Aorta (tissue), 5 donors: ENCODE measurements at regions of chr20 and their contacts with region 1.

Region 1: GRCh38 chr20:3465301-3465700 is 5.5 kb upstream of the ATRN start:
- DNase-seq: no peak
- ATAC-seq: no peak
- H3K4me3 ChIP-seq: no peak overlapping the region
- H3K27ac ChIP-seq: no peak overlapping the region
- H3K4me1 ChIP-seq: no peaks in the 10 kb centered on the region
- H3K27me3 ChIP-seq: no peaks in the 10 kb centered on the region

Region 2: GRCh38 chr20:3413393-3413889 is 51.9 kb before region 1 on chr20:
- intact Hi-C with region 1: loop called (anchors 5 kb)
- DNase-seq: no peak
- ATAC-seq: no peak
- H3K4me3 ChIP-seq: no peak overlapping the region
- H3K27ac ChIP-seq: no peak overlapping the region
- H3K4me1 ChIP-seq: no peaks in the 10 kb centered on the region
- H3K27me3 ChIP-seq: no peaks in the 10 kb centered on the region